ENCODE measurements at regions of chr9 and their contacts with region 1.

Region 1: GRCh38 chr9:68769852-68770251 is 64.8 kb downstream of the PIP5K1B start:
- DNase-seq: no peak
- H3K4me3 Mint-ChIP-seq: no peak overlapping the region
- H3K27ac Mint-ChIP-seq: no peak overlapping the region
- H3K4me1 Mint-ChIP-seq: no peaks in the 10 kb centered on the region
- H3K27me3 Mint-ChIP-seq: peaks cover 2% of the 10 kb centered on the region

Region 2: DNA sequence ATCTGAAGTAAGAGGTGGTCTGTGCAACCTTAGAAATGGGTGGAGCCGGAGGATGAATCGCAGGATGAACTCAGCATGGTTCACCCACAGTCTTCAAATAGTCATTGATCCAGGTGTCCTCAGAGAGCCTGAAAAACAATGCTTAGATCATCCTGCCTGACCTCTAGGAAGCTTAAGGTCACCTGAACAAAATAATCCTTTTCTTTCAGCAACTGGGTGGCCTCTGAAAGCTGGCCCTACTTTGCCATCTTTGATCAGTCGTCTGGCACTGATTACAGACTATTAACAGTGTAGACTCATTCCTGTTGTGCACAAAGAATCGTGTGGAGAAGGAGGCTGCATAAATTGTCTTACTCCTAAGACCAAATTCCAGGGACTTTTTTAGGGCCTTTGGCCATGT is 14.1 kb before region 1 on chr9:
- CTCF ChIA-PET with region 1: interaction called, 5 read pairs
- intact Hi-C with region 1: loop called (anchors 2 kb)
- DNase-seq: no peak
- H3K4me3 Mint-ChIP-seq: no peak overlapping the region
- H3K27ac Mint-ChIP-seq: no peak overlapping the region
- H3K4me1 Mint-ChIP-seq: no peaks in the 10 kb centered on the region
- H3K27me3 Mint-ChIP-seq: peaks cover 8% of the 10 kb centered on the region

Measured in activated naive CD4-positive, alpha-beta T cell treated with anti-CD3 and anti-CD28 coated beads for 36 hours (primary cell).